ENCODE measurements at regions of chr2 and their contacts with region 1.

Region 1: DNA sequence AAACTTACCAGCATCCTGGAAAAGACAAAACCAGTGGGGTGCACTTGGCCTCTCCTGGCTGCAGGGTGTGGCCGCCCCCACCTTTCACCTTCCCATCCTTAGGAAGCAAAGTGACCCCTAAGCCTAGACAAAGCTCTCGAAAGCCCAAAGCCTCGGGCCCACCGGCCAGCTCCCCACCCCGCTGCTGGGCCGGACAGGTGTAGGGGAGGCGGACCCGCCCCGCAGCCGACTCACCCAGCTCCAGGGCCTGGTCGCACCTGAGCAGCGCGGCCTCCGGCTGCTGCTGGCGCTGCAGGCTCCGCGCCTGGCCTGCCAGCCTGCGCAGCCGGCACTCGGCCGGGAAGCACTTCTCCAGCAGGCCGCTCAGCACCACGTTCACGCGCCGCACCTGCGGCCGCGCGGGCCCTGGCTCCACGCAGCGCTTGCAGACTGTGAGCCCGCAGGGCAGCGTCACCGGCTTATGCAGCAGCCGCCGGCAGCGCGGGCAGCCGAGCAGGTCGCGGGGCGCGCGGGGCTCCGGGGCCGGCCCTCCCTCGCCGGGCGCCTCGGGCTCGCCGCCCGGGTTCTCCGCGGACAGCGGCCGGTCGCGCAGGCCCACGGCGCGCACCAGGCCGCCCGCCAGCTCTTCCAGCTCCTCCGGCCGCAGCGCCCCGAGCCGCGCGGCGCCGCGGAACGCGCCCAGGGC is 978 bp downstream of the LONRF2 start:
- DNase-seq: peak; percentile 46 to 69 (median 56)
- ATAC-seq: peak; percentile 85
- H3K4me3 ChIP-seq: peak overlapping the region; percentile 61
- H3K27ac ChIP-seq: no peak overlapping the region
- H3K4me1 ChIP-seq: peaks cover 8 to 18% of the 10 kb centered on the region in 2 experiments; a peak in 4 of 5 replicates
- H3K27me3 ChIP-seq: 0 out of 5 replicates have a peak, but pooled peaks cover 0 to 2% of the 10 kb centered on the region in 2 experiments
- CTCF ChIP-seq: peak; percentile 44 to 63 (median 46); a peak in 4 of 6 replicates
- EP300 ChIP-seq: no peak
- POLR2A ChIP-seq: no peak
- RAD21 ChIP-seq: no peak

Region 2: GRCh38 chr2:99430614-99431291 is 890.6 kb before region 1 on chr2:
- CTCF ChIA-PET with region 1: no interaction called
- POLR2A ChIA-PET with region 1: no interaction called
- in situ Hi-C with region 1: no loop called
- intact Hi-C with region 1: no loop called
- DNase-seq: no peak
- ATAC-seq: no peak
- H3K4me3 ChIP-seq: no peak overlapping the region
- H3K27ac ChIP-seq: no peak overlapping the region
- H3K4me1 ChIP-seq: no peaks in the 10 kb centered on the region
- H3K27me3 ChIP-seq: no peaks in the 10 kb centered on the region
- CTCF ChIP-seq: no peak
- EP300 ChIP-seq: no peak
- POLR2A ChIP-seq: no peak
- RAD21 ChIP-seq: no peak

Region 3: DNA sequence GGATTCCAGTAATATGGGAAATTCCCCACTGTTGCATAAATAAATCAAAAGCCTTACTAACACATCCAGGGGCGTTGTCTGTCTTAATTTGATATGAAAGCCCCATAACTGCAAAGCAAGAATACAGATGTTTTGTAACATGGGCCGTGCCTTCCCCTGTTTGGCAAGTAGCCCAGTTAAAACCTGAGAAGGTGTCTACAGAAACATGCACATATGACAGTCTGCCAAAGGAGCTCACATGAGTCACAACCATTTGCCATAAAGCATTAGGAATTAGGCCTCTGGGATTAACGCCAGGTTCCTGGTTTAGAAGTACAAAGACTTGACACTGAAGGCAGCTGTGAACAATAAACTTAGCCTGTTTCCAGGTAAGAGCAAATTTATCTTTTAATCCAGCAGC is 44.1 kb after region 1 on chr2:
- CTCF ChIA-PET with region 1: no interaction called
- POLR2A ChIA-PET with region 1: no interaction called
- in situ Hi-C with region 1: no loop called
- intact Hi-C with region 1: no loop called
- DNase-seq: peak in 1 of 4 experiments; percentile 16
- ATAC-seq: no peak
- H3K4me3 ChIP-seq: no peak overlapping the region
- H3K27ac ChIP-seq: no peak overlapping the region
- H3K4me1 ChIP-seq: no peaks in the 10 kb centered on the region
- H3K27me3 ChIP-seq: no peaks in the 10 kb centered on the region
- CTCF ChIP-seq: no peak
- EP300 ChIP-seq: no peak
- POLR2A ChIP-seq: no peak
- RAD21 ChIP-seq: no peak

Region 4: GRCh38 chr2:100381240-100381639 is 59.9 kb after region 1 on chr2:
- CTCF ChIA-PET with region 1: no interaction called
- POLR2A ChIA-PET with region 1: no interaction called
- in situ Hi-C with region 1: no loop called
- intact Hi-C with region 1: loop called (anchors 5 kb)
- DNase-seq: peak; percentile 66 to 90 (median 71)
- ATAC-seq: peak; percentile 96
- H3K4me3 ChIP-seq: no peak overlapping the region
- H3K27ac ChIP-seq: no peak overlapping the region
- H3K4me1 ChIP-seq: no peaks in the 10 kb centered on the region; a peak in 1 of 5 replicates
- H3K27me3 ChIP-seq: no peaks in the 10 kb centered on the region
- CTCF ChIP-seq: peak; percentile 85 to 95 (median 89)
- EP300 ChIP-seq: no peak
- POLR2A ChIP-seq: no peak
- RAD21 ChIP-seq: peak; percentile 95 to 98